Natural killer cell (primary cell): ENCODE measurements at regions of chr13 and their contacts with region 1.

Region 1: DNA sequence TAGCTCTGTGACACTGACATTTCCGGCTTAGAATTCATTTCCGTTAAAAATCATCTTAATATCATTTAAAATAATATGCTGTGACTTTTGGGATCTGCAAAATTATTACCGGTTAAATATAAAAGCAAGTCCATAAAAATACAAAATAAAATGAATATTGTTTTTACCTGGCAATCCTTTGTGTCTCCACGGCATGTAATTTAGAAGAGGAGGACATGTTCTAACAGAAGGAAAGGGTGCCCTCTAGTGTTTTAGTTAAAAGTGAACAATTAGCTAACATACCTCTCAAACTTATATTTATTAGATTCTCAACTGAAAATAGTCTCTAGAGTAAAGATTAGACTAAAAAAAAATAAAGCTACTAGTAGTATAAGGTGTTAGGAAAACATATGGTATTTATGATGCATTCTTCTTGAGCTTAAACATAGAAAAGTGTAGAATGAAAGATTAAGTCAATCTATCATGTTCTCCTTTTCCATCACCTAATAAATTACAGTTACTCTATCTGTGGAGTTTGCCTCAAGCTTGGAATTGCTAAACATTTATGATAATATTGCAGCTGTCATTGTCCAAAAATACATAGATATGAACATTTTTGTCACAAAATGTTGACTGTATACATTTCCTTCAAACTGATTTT is 676.7 kb upstream of the SPRY2 start:
- DNase-seq: peak in 1 of 2 donors; percentile 32
- ATAC-seq: peak in 2 of 3 donors; percentile 47 to 63
- H3K4me3 ChIP-seq: no peak overlapping the region
- H3K4me3 Mint-ChIP-seq: no peak overlapping the region
- H3K27ac ChIP-seq: no peak overlapping the region
- H3K27ac Mint-ChIP-seq: no peak overlapping the region
- H3K4me1 ChIP-seq: no peaks in the 10 kb centered on the region
- H3K4me1 Mint-ChIP-seq: no peaks in the 10 kb centered on the region
- H3K27me3 ChIP-seq: no peaks in the 10 kb centered on the region
- H3K27me3 Mint-ChIP-seq: peaks cover 0 to 7% of the 10 kb centered on the region in 2 donors
- CTCF ChIP-seq: peak; percentile 64

Region 2: DNA sequence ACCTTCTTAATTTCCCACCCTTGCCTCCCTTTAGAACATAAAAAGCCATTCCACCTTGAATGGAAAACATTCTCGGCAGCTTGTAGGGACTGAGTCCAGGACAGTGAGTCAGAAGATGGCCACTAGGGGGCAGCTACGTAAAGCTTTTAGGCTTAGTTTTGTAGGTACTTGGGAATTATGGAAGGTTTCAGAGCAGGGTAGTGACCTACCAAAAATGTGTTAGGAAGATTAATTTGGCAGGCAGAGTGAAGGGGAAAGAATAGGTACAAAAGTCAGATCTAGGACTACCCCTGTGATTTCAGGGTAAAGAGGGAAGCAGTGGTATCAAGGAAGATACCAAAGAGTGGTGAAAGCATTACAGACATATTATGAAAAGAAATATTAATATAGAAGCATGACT is 1338.3 kb before region 1 on chr13:
- intact Hi-C with region 1: loop called (anchors 1 kb)
- DNase-seq: peak; percentile 26 to 46
- ATAC-seq: peak in 1 of 3 donors; percentile 63
- H3K4me3 ChIP-seq: no peak overlapping the region
- H3K4me3 Mint-ChIP-seq: no peak overlapping the region
- H3K27ac ChIP-seq: no peak overlapping the region
- H3K27ac Mint-ChIP-seq: no peak overlapping the region
- H3K4me1 ChIP-seq: no peaks in the 10 kb centered on the region
- H3K4me1 Mint-ChIP-seq: no peaks in the 10 kb centered on the region
- H3K27me3 ChIP-seq: no peaks in the 10 kb centered on the region
- H3K27me3 Mint-ChIP-seq: no peaks in the 10 kb centered on the region
- CTCF ChIP-seq: peak; percentile 77

Region 3: GRCh38 chr13:80342471-80343380 is 674.9 kb before region 1 on chr13:
- intact Hi-C with region 1: loop called (anchors 1 kb)
- DNase-seq: peak; percentile 74 to 77
- ATAC-seq: peak; percentile 50 to 71 (median 61)
- H3K4me3 ChIP-seq: peak overlapping the region; percentile 56
- H3K4me3 Mint-ChIP-seq: no peak overlapping the region
- H3K27ac ChIP-seq: peak overlapping the region; percentile 5
- H3K27ac Mint-ChIP-seq: peak overlapping the region in 1 of 2 donors; percentile 24
- H3K4me1 ChIP-seq: peaks cover 47% of the 10 kb centered on the region
- H3K4me1 Mint-ChIP-seq: peaks cover 21 to 30% of the 10 kb centered on the region in 2 donors
- H3K27me3 ChIP-seq: no peaks in the 10 kb centered on the region
- H3K27me3 Mint-ChIP-seq: peaks cover 13 to 18% of the 10 kb centered on the region in 2 donors
- CTCF ChIP-seq: peak; percentile 98